ENCODE measurements at regions of chr10 and their contacts with region 1.

Region 1: GRCh38 chr10:48981310-48981907 is 41.8 kb upstream of the LRRC18 start:
- DNase-seq: peak; percentile 50 to 66
- ATAC-seq: peak; percentile 73 to 93 (median 84)
- H3K4me3 ChIP-seq: no peak overlapping the region
- H3K27ac ChIP-seq: no peak overlapping the region
- H3K4me1 ChIP-seq: peaks cover 0 to 8% (median 3%) of the 10 kb centered on the region in 9 donors
- H3K27me3 ChIP-seq: no peaks in the 10 kb centered on the region
- CTCF ChIP-seq: peak; percentile 78 to 92 (median 87)

Region 2: DNA sequence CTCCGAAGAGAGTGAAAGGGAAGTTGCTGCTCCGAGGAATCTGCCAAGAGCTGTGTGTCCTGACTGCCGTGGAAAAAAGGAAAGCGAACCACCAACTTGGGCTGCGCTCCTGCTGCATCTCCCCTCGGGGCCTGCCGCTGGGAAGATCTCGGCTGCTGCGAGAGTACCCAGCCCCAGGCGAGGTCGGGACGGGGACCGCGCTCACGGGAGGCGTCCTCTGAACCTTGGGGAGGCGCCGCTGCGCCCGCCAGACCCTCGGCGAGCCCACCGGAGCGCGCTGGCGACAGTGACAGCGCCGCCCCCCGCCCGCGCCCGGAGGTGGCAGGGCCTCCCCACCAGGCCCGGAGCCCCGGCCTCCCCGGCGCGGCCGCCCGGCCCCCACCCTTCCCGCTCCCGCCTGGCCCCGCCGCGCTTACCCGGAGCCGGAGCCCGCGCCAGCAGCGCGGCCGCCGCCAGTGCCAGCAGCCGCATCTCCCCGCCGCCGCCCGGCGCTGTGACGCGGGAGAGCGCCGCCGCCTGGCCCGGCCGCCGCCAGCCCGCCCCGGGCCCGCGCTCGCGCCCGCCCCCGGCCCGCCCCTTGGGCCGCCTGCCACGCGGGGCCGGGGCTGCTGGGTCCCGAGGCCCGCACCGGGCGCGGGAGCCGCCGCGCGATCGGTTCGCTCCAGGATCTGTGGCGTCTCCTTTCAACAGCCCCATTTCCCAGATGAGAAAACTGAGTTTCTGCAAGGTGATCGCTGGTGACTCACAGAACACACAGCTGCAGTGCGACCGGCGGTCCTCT is 133.8 kb after region 1 on chr10 and contains the start of gene VSTM4:
- intact Hi-C with region 1: loop called in 4 of 10 experiments (anchors 1 to 5 kb)
- DNase-seq: peak; percentile 41 to 68
- ATAC-seq: peak; percentile 22 to 73 (median 51)
- H3K4me3 ChIP-seq: peak within 1 kb of the TSS; percentile 11 to 79 (median 66)
- H3K27ac ChIP-seq: peak within 1 kb of the TSS in 9 of 10 donors; percentile 74 to 89 (median 87)
- H3K4me1 ChIP-seq: peaks cover 3 to 60% (median 45%) of the 10 kb centered on the region in 9 donors
- H3K27me3 ChIP-seq: peaks cover 0 to 12% (median 0%) of the 10 kb centered on the region in 7 donors
- CTCF ChIP-seq: peak in 4 of 9 donors; percentile 18 to 36 (median 23)
- total RNA-seq, gene VSTM4: 12.0 to 26.7 (median 18.1) TPM

Region 3: GRCh38 chr10:49164559-49165188 is 183.3 kb after region 1 on chr10:
- intact Hi-C with region 1: loop called (anchors 1 to 5 kb)
- DNase-seq: peak in 1 of 2 donors; percentile 34
- ATAC-seq: peak in 6 of 8 donors; percentile 27 to 73 (median 62)
- H3K4me3 ChIP-seq: no peak overlapping the region
- H3K27ac ChIP-seq: no peak overlapping the region
- H3K4me1 ChIP-seq: peaks cover 0 to 40% (median 13%) of the 10 kb centered on the region in 9 donors
- H3K27me3 ChIP-seq: no peaks in the 10 kb centered on the region
- CTCF ChIP-seq: peak; percentile 33 to 76 (median 66)

Region 4: DNA sequence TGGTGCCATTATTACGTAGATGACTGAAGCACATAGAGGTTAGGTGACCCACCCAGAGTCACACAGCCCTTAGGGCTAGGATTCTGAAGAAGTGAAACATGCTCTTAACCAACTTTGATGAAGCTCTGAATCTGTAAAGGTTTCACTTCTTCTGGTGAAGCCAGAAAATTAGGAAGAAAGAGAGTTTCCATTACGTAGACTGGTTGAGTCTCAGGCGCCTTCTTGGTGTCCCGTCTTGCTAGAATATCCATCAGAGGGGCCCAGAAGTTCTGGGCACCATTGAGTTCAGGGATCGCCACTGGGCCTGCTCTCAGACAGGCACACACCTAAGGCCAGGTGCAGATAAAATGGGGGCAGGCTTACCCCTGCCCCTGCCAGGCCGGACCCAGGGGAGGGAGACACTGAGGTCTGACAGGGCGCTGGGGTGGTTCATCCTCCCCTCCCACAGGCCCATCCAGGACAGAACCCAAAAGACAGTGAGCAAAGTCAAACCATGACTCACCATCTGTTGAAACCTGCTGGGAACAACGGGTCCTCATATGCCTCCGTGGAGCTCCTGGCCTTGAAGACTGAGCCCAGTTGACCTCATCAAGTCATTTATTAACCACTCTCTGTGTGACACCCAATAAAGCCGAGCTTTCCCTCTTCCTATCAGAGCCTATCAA is 381.3 kb after region 1 on chr10:
- intact Hi-C with region 1: loop called in 3 of 10 experiments (anchors 10 kb)
- DNase-seq: no peak
- ATAC-seq: no peak
- H3K4me3 ChIP-seq: no peak overlapping the region
- H3K27ac ChIP-seq: no peak overlapping the region
- H3K4me1 ChIP-seq: peaks cover 11 to 33% (median 18%) of the 10 kb centered on the region in 9 donors
- H3K27me3 ChIP-seq: peaks cover 0 to 4% (median 0%) of the 10 kb centered on the region in 7 donors
- CTCF ChIP-seq: no peak

Region 5: DNA sequence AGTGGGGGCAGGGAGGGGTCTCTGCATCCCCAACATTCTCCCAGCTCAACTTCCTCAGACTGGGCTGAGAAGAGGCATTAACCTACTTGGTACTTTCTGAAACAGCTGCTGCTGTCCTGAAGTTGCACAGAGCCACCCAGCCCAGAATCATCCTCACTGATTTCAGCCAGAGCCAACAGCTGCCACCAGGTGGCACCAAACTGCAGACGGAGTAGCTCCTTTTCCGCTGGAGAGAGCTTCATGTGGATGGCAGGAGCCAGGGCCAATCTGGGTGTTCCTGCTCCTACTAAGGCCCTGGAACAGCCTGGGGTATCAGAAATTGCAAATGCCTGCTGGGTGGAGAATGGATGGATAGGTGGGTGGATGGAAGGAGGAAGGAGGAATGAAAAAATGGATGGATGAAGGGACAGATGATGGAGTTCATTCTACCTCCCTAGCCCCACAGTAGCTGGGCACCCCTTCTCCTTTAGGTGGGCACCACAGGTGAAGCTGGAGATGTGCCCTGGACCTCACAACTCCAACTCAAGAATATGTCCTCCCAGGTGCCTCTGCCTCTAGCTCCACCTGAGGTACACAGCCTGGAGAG is 426.2 kb after region 1 on chr10:
- intact Hi-C with region 1: loop called in 1 of 10 experiments (anchors 10 kb)
- DNase-seq: peak; percentile 74 to 79
- ATAC-seq: peak; percentile 63 to 85 (median 78)
- H3K4me3 ChIP-seq: no peak overlapping the region
- H3K27ac ChIP-seq: no peak overlapping the region
- H3K4me1 ChIP-seq: peaks cover 0 to 32% (median 6%) of the 10 kb centered on the region in 9 donors
- H3K27me3 ChIP-seq: peaks cover 0 to 30% (median 17%) of the 10 kb centered on the region in 7 donors
- CTCF ChIP-seq: peak; percentile 66 to 89 (median 86)

Region 6: DNA sequence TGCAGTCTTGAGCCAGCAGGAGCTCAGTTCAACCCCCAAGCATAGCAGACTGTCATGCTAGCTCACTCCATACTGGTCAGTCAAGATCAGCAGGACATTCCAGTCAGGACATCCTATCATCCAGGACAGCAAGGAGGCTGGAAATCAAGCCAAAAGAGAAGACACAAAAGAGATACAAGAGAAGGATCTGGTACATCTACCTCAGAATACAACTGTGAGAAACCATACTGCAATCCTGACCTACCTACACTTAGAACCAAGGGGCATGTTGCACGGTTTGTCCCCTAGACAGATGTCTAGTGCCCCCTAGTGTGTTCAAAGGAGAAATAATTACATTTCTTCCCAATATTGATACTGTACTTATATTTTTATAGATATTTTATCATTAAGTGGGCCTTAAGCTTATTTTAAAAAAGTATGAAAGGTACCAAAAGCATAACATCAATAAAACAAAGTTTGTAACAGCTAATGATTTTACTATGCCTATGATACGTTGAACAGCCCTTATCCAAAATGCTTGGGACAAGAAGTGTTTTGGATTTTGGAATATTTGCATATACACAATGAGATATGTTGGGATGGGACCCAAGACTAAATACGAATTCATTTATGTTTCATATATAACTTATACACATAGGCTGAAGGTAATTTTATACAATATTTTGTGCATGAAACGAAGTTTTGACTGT is 530.9 kb after region 1 on chr10:
- intact Hi-C with region 1: loop called in 9 of 10 experiments (anchors 2 to 10 kb)
- DNase-seq: no peak
- ATAC-seq: peak in 1 of 8 donors; percentile 44
- H3K4me3 ChIP-seq: no peak overlapping the region
- H3K27ac ChIP-seq: no peak overlapping the region
- H3K4me1 ChIP-seq: peaks cover 0 to 18% (median 7%) of the 10 kb centered on the region in 9 donors
- H3K27me3 ChIP-seq: no peaks in the 10 kb centered on the region
- CTCF ChIP-seq: peak; percentile 10 to 74 (median 64)

Region 7: GRCh38 chr10:49518982-49519578 is 537.7 kb after region 1 on chr10:
- intact Hi-C with region 1: loop called in 8 of 10 experiments (anchors 5 to 10 kb)
- DNase-seq: peak in 1 of 2 donors; percentile 19
- ATAC-seq: peak in 7 of 8 donors; percentile 46 to 82 (median 66)
- H3K4me3 ChIP-seq: no peak overlapping the region
- H3K27ac ChIP-seq: no peak overlapping the region
- H3K4me1 ChIP-seq: peaks cover 0 to 30% (median 18%) of the 10 kb centered on the region in 9 donors
- H3K27me3 ChIP-seq: no peaks in the 10 kb centered on the region
- CTCF ChIP-seq: peak; percentile 51 to 75 (median 65)

Measured in heart right ventricle (tissue), 16 donors.